Caco-2 (cell line): ENCODE measurements at regions of chr10 and their contacts with region 1.

Region 1: DNA sequence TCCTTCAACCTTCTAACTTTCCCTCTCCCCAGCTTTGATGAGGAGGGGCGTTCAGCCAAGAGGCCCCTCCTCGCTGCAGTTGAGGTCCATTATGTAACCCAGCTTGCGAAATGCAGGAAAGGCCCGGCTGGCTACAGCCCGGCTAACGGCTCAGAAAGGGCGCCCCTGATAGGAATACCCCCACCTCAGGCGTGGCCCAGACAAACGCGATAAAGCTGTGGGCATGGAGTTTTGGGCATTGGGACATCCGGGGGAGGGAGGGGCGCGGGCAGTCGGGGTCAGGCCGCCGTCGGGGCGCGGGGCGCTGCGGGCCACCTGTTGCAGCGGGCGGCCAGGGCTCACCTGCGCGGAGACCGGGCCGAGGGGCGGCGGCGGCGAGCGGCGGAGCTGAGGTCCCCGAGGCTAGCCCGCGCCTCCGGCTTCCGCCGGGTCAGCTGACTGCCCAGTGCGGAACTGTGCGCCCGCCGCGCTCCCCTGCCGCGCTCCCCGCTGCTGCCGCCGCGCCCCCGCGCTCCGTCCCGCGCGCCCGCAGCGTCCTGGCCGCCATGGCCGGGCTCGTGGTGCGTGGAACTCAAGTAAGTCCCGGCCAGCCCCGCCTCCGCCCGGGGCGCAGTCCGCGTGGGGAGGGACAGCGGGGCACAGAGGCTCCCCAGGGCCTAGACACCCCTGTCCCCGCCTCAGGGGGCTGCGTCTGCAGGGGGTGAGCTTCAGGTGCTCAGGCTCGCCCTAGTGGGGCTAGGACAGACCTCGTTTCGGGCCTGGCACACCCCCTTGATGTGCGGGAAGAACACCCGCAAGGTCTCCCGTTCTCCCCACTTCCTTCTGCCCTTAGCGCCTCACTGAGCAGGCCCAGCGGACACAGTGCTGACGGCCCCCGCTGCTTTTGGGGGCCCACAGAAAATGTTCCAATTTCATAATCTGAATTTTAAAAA is at the start of gene LRMDA:
- DNase-seq: peak; percentile 71 to 77
- H3K4me3 ChIP-seq: peak within 1 kb of the TSS; percentile 80
- H3K4me3 Mint-ChIP-seq: peak within 1 kb of the TSS; percentile 72
- H3K27ac Mint-ChIP-seq: peak within 1 kb of the TSS; percentile 84
- H3K4me1 ChIP-seq: peaks cover 52% of the 10 kb centered on the region
- H3K4me1 Mint-ChIP-seq: peaks cover 44% of the 10 kb centered on the region
- H3K27me3 ChIP-seq: no peaks in the 10 kb centered on the region
- H3K27me3 Mint-ChIP-seq: no peaks in the 10 kb centered on the region
- CTCF ChIP-seq: no peak
- total RNA-seq, gene LRMDA: 18.5 and 21.6 TPM in 2 replicates

Region 2: GRCh38 chr10:75358835-75359431 is 72.5 kb before region 1 on chr10:
- CTCF ChIA-PET with region 1: no interaction called
- POLR2A ChIA-PET with region 1: no interaction called
- intact Hi-C with region 1: no loop called
- DNase-seq: peak in 1 of 2 experiments; percentile 37
- H3K4me3 ChIP-seq: no peak overlapping the region
- H3K4me3 Mint-ChIP-seq: no peak overlapping the region
- H3K27ac Mint-ChIP-seq: peak overlapping the region; percentile 87
- H3K4me1 ChIP-seq: no peaks in the 10 kb centered on the region
- H3K4me1 Mint-ChIP-seq: peaks cover 11% of the 10 kb centered on the region
- H3K27me3 ChIP-seq: no peaks in the 10 kb centered on the region
- H3K27me3 Mint-ChIP-seq: no peaks in the 10 kb centered on the region
- CTCF ChIP-seq: no peak

Region 3: DNA sequence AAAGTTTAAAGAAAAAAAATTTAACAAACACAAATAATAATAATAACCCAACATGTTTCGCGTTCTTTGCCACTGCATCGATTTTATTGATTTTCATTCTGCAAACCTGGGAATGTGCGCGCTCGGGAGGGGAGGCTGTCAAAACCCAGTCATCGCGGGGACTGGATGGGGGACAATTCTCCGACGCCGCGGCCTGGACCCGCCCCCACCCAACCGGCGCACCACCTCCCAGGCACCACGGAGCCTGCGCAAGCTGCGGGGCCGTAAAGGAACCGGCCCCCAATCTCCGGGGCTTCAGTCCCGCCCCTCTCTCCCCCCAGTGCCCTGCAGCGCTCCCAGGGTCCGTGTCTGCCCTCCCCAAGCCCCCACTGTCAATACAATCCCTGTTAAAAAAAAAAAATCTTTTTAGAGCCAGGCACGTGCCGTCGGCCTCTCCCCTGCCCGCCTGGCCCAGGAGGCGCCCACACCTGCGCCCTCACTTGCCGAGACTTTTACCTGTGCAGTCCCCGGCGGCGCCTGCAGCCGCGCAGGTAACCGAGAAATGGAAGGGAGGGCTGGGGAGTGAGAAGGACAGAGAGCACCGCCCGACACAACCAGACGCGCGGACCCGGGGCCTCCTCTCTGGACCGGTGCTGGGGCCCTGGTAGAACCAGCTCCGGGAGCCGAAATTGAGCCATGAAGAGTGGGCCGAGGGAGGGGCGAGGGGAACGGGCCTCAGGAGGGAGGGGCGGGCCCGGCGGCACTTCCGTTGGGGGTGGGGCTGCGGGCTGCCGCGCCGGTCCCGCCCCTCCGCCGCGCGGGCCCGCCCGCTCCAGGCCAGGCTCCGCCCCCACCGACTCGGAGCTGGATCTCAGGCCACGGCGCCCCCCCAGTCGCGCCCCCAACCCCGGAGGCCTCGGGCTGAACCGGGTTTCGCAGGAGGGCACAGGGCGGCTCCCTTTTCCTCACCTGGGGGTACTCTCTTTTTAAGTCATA is 22.2 kb before region 1 on chr10:
- CTCF ChIA-PET with region 1: interaction called, 8 read pairs
- POLR2A ChIA-PET with region 1: interaction called, 24 read pairs
- intact Hi-C with region 1: loop called (anchors 1 kb)
- DNase-seq: peak; percentile 84 to 88
- H3K4me3 ChIP-seq: peak overlapping the region; percentile 67
- H3K4me3 Mint-ChIP-seq: peak overlapping the region; percentile 92
- H3K27ac Mint-ChIP-seq: peak overlapping the region; percentile 79
- H3K4me1 ChIP-seq: peaks cover 15% of the 10 kb centered on the region
- H3K4me1 Mint-ChIP-seq: peaks cover 14% of the 10 kb centered on the region
- H3K27me3 ChIP-seq: no peaks in the 10 kb centered on the region
- H3K27me3 Mint-ChIP-seq: no peaks in the 10 kb centered on the region
- CTCF ChIP-seq: peak in 1 of 2 experiments; percentile 34

Region 4: DNA sequence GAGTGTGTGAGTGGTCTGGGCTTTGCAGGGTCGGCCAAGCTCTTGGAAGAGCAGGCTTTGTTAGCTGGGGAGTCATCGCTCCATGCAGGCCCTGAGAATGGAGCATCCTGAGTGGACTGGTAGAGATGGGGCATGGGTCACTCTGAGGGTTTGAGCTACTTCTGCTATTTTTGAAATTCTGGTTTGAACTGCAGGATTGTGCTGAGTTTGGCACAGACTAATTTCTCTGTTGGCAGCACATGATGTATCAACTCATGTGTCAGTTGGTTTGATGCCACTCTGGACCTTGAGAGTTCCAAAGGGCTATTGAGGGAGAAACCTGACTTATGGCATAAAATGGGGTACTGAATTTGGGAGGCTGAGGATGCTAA is 56.3 kb after region 1 on chr10:
- CTCF ChIA-PET with region 1: no interaction called
- POLR2A ChIA-PET with region 1: no interaction called
- intact Hi-C with region 1: no loop called
- DNase-seq: no peak
- H3K4me3 ChIP-seq: no peak overlapping the region
- H3K4me3 Mint-ChIP-seq: no peak overlapping the region
- H3K27ac Mint-ChIP-seq: no peak overlapping the region
- H3K4me1 ChIP-seq: no peaks in the 10 kb centered on the region
- H3K4me1 Mint-ChIP-seq: no peaks in the 10 kb centered on the region
- H3K27me3 ChIP-seq: no peaks in the 10 kb centered on the region
- H3K27me3 Mint-ChIP-seq: no peaks in the 10 kb centered on the region
- CTCF ChIP-seq: no peak

Region 5: DNA sequence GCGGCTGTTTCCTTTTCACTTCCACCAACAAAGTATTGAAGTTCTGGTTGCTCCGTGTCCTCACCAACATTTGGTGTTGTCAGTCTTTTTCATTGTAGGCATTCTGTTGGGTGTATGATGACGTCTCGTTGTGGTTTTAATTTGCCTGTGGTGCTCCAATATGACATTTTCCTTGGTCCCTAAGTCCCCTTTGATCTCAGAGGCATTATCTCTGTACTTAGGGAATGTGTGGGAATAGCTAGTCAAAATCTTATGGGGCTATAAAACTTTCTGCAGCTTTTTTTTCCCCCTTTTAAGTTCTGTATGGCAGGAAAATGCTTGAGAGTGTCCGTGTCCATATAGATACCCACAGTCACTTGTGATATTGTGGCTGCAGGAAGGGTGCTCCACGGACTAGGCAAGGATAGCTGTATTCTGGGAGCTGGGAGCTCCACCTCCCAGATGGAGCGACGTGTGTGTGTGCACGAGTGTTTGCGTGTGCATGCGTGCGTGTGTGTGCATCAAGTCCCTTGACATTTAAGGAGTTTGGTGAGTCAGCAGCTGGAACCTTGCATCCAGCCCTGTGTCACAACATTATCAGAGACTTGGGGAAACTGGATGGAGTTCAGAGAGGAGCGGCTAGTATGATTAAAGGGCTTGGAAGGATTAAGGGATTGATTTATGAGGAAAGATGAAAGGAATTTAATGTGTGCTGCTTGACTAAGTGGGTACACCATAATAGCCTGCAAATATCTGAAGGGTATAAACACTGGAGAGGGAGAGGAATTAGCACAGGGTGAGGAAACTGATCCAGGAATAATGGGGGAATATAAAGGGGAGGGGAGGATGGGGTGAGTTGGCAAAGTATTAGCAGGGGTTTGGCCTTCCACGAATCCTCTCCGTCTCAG is 66.8 kb after region 1 on chr10:
- CTCF ChIA-PET with region 1: interaction called, 4 read pairs
- POLR2A ChIA-PET with region 1: interaction called, 3 read pairs
- intact Hi-C with region 1: loop called (anchors 1 kb)
- DNase-seq: peak; percentile 57 to 58
- H3K4me3 ChIP-seq: no peak overlapping the region
- H3K4me3 Mint-ChIP-seq: peak overlapping the region; percentile 7
- H3K27ac Mint-ChIP-seq: peak overlapping the region; percentile 1
- H3K4me1 ChIP-seq: peaks cover 51% of the 10 kb centered on the region
- H3K4me1 Mint-ChIP-seq: peaks cover 46% of the 10 kb centered on the region
- H3K27me3 ChIP-seq: no peaks in the 10 kb centered on the region
- H3K27me3 Mint-ChIP-seq: no peaks in the 10 kb centered on the region
- CTCF ChIP-seq: no peak

Region 6: DNA sequence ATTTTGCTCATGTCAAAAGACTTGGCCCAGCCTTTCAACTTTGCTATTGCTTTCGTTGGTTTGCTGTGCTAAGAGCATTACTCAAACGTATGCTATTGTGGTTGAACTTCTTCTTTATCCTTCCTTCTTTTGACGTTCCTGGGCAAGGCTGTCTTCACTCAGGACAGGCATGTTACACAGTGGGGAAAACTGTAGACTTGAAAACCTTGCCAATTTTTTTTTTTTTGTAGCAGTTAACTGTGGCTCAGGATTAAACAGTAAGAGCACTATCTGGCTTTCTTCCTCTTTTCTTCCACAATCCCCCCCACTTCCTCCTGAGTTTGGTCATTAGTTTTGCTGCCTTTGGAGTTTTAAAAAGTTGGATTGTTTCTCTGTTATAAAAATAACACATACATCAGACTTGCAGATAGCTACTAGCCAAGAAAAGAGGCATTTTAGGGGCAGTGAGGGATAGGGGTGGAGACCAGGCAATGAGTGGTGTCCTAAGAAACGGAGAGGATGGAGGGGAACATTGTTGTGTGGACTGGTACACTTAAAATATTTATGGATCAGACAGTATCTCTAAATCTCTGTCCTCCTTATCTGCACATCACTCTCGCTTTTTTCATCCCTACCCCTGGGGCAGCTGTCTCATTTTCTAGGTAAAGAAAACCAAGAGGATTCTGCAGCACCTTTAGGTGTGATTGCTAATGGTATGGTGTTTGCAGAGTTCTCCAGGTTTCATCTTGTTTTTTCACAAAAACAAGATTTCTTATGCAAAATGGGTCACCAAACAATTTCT is 181.6 kb after region 1 on chr10:
- CTCF ChIA-PET with region 1: no interaction called
- POLR2A ChIA-PET with region 1: interaction called, 15 read pairs
- intact Hi-C with region 1: no loop called
- DNase-seq: no peak
- H3K4me3 ChIP-seq: no peak overlapping the region
- H3K4me3 Mint-ChIP-seq: no peak overlapping the region
- H3K27ac Mint-ChIP-seq: no peak overlapping the region
- H3K4me1 ChIP-seq: no peaks in the 10 kb centered on the region
- H3K4me1 Mint-ChIP-seq: peaks cover 30% of the 10 kb centered on the region
- H3K27me3 ChIP-seq: no peaks in the 10 kb centered on the region
- H3K27me3 Mint-ChIP-seq: no peaks in the 10 kb centered on the region
- CTCF ChIP-seq: no peak